AG04449 (cell line): ENCODE measurements at regions of chr1 and their contacts with region 1.

Region 1: GRCh38 chr1:23496490-23497181 is 12.7 kb upstream of the ASAP3 start:
- DNase-seq: no peak
- H3K4me3 ChIP-seq: no peak overlapping the region
- CTCF ChIP-seq: no peak

Region 2: GRCh38 chr1:23463286-23463685 is 33.4 kb before region 1 on chr1:
- CTCF ChIA-PET with region 1: interaction called, 10 read pairs
- POLR2A ChIA-PET with region 1: no interaction called
- DNase-seq: no peak
- H3K4me3 ChIP-seq: no peak overlapping the region
- CTCF ChIP-seq: no peak

Region 3: DNA sequence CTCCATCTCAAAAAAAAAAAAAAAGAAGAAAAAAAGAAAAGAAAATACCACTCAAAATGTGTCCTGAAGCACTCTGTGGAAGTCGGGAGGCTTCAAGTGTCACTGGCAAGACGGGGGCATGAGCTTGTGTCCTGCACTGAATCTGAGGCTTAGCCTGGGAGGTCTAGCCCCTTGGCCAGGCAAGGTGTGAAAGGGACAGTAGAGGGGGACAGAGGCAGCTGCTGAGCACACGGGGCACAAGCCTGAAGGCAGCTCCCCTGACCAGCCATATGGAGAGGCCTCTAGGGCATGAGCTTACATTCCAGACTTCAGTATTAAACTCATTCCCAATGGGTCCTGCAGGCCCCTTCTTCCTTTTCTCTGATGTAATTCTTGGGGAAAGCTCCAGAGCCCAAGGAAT is 10.9 kb after region 1 on chr1:
- CTCF ChIA-PET with region 1: interaction called, 107 read pairs
- POLR2A ChIA-PET with region 1: no interaction called
- DNase-seq: no peak
- H3K4me3 ChIP-seq: no peak overlapping the region
- CTCF ChIP-seq: no peak

Region 4: GRCh38 chr1:23530747-23531561 is 34.3 kb after region 1 on chr1 and contains the start of gene E2F2:
- CTCF ChIA-PET with region 1: interaction called, 313 read pairs
- POLR2A ChIA-PET with region 1: no interaction called
- DNase-seq: no peak
- H3K4me3 ChIP-seq: peak within 1 kb of the TSS; percentile 65
- CTCF ChIP-seq: peak; percentile 34

Region 5: DNA sequence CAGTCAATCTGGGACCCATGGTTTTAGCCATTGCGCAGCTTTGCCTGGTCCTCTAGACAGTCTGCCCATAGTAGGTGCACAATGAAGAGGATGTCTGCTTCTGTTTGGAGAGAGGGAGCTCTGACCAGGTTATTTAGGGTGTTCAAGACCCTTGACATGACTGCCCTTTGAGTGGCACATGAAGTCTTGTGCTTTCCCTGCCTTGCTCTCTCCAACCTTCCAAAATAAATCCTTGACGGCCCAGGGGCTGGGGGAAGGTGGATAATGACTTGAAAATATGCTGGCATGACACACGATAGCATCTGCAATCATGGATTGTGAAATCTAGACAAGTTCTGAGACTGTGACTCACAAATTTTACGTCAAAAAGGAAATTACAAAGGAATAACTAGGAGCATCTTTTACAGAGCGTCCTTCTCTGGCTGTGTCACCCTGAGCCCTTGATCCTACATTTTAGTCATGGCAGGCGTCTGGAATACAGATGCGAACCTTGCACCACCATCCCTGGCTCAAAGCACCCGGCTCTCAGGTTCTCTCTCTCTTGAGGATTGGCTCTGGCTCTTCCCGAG is 88.9 kb after region 1 on chr1:
- CTCF ChIA-PET with region 1: no interaction called
- POLR2A ChIA-PET with region 1: no interaction called
- DNase-seq: peak; percentile 97
- H3K4me3 ChIP-seq: peak overlapping the region; percentile 18
- CTCF ChIP-seq: no peak

Region 6: DNA sequence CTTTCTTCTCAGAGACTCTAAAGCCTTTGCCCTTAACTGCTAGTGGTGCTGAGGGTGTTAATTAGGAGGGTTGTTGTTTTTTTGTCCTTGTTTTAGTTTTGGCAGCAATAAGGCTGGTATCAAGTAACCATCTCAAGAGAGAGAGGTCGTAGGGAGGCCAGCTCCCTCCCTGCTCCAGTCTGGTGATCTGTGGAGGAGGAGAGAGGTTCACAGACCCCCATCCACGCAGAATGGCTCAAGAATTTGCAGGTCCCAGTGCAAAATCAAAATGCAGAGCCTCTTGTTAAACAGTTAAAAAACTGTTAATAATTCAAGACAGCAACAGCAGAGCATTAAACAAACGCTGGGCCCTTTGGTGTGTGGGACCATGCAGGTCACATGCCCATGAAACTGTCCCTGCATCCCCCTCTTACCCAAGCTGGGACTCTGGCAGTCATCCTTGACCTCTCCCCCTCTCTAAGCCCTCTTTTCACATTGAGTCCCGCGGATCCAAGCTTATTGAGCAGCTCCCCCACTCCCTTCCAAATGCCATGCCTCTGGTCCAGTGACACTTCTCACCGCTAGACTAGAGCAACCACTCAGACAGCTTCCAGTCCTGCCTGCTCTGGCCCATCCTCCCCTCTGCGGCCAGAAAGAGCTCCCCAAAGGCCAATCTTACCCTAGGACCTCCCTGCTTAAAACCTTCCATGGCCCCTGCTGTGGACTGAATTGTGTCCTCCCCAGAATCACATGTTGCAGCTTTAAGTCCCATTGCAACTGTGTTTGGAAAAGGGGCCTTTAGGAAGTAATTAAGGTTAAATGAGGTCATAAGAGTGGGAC is 147.3 kb after region 1 on chr1:
- CTCF ChIA-PET with region 1: interaction called, 125 read pairs
- POLR2A ChIA-PET with region 1: no interaction called
- DNase-seq: no peak
- H3K4me3 ChIP-seq: no peak overlapping the region
- CTCF ChIP-seq: no peak

Region 7: GRCh38 chr1:23664837-23665795 is 168.5 kb after region 1 on chr1:
- CTCF ChIA-PET with region 1: interaction called, 76 read pairs
- POLR2A ChIA-PET with region 1: no interaction called
- DNase-seq: no peak
- H3K4me3 ChIP-seq: no peak overlapping the region
- CTCF ChIP-seq: peak; percentile 1